Naive thymus-derived CD4-positive, alpha-beta T cell (primary cell): ENCODE measurements at regions of chr10 and their contacts with region 1.

Region 1: DNA sequence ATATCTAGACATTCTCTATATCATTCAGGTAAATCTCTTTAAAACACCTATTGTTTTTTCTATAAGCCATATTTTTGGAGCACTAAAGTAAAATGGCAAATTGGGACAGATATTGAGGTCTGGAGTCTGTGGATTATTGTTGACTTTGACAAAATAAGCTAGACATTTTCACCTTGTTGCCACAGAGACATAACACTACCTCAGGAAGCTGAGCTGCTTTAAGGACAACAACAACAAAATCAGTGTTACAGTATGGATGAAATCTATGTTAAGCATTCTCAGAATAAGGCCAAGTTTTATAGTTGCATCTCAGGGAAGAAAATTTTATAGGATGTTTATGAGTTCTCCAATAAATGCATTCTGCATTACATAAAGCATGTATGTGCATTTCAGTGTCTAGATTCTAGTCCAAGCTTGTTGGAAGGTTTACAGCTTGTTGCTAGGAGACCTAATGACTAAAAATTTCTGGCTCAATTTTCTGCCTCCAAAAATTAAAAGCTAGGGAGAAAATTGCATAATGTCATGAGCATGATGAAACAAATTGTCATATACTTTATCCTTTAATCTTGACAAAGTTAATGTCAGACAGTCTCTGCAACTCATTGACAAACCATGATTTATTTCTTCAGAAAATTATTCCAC is 18.3 kb downstream of the LIPM start:
- DNase-seq: peak in 1 of 9 donors; percentile 13
- ATAC-seq: no peak
- H3K4me3 ChIP-seq: no peak overlapping the region
- H3K4me3 Mint-ChIP-seq: peak overlapping the region in 2 of 10 donors; percentile 13 to 16
- H3K27ac ChIP-seq: no peak overlapping the region
- H3K27ac Mint-ChIP-seq: peak overlapping the region in 4 of 9 donors; percentile 19 to 86 (median 44)
- H3K4me1 ChIP-seq: peaks cover 24 to 34% of the 10 kb centered on the region in 2 donors
- H3K4me1 Mint-ChIP-seq: peaks cover 20 to 66% (median 51%) of the 10 kb centered on the region in 7 donors
- H3K27me3 ChIP-seq: no peaks in the 10 kb centered on the region
- H3K27me3 Mint-ChIP-seq: peaks cover 0 to 4% (median 0%) of the 10 kb centered on the region in 5 donors

Region 2: GRCh38 chr10:88791924-88792323 is 28.9 kb before region 1 on chr10:
- CTCF ChIA-PET with region 1: no interaction called
- POLR2A ChIA-PET with region 1: interaction called, 4 read pairs
- intact Hi-C with region 1: loop called in 1 of 2 experiments (anchors 2 kb)
- DNase-seq: no peak
- ATAC-seq: no peak
- H3K4me3 ChIP-seq: no peak overlapping the region
- H3K4me3 Mint-ChIP-seq: no peak overlapping the region
- H3K27ac ChIP-seq: no peak overlapping the region
- H3K27ac Mint-ChIP-seq: no peak overlapping the region
- H3K4me1 ChIP-seq: peaks cover 0 to 4% of the 10 kb centered on the region in 2 donors
- H3K4me1 Mint-ChIP-seq: peaks cover 4 to 22% (median 8%) of the 10 kb centered on the region in 7 donors
- H3K27me3 ChIP-seq: no peaks in the 10 kb centered on the region
- H3K27me3 Mint-ChIP-seq: peaks cover 0 to 37% (median 0%) of the 10 kb centered on the region in 5 donors

Region 3: GRCh38 chr10:89526358-89526757 is 705.5 kb after region 1 on chr10:
- CTCF ChIA-PET with region 1: no interaction called
- POLR2A ChIA-PET with region 1: no interaction called
- intact Hi-C with region 1: no loop called
- DNase-seq: no peak
- ATAC-seq: no peak
- H3K4me3 ChIP-seq: no peak overlapping the region
- H3K4me3 Mint-ChIP-seq: no peak overlapping the region
- H3K27ac ChIP-seq: no peak overlapping the region
- H3K27ac Mint-ChIP-seq: no peak overlapping the region
- H3K4me1 ChIP-seq: no peaks in the 10 kb centered on the region
- H3K4me1 Mint-ChIP-seq: no peaks in the 10 kb centered on the region
- H3K27me3 ChIP-seq: no peaks in the 10 kb centered on the region
- H3K27me3 Mint-ChIP-seq: peaks cover 2 to 24% (median 14%) of the 10 kb centered on the region in 5 donors